MCF 10A (cell line): ENCODE measurements at regions of chr19 and their contacts with region 1.

Region 1: DNA sequence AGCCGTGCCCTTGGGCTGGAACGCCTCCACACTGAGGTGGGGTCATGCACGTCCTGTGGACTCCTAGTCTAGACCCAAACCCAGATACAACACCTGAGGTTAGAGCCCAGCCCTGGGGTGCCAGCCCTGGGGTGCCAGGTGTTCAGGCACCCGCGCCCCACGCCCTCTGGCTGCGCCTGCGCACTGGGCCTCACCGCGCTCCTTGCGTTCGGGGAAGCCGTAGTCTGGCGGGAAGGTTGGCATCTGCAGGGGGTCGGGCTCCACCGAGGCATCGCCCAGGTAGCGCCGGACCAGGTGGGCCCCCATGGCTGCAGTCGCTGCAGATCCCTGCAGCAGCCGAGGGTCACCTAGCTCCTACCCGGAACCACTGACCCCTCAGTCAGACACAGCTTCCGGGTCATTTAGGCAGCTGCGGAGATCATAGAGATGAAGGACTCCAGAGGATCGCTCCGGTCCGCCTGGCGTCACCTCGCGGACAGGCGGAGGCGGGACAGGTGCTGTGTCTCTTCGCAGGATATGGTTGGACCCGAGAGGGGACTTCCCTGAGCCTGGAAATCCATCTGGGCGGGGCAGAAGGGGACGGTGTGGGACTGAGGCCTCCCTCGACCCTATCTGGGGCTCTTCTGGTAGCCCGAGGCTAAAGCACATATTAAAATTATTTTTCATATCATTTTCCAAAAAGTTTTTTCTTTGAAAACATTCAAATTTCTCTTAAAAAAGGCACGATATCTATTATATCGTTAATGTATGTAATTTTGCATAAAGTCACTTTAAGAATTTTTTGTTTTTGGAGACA is at the start of gene NDUFB7:
- DNase-seq: peak; percentile 96
- H3K4me3 Mint-ChIP-seq: peak within 1 kb of the TSS; percentile 94
- H3K27ac Mint-ChIP-seq: peak within 1 kb of the TSS; percentile 78
- H3K4me1 Mint-ChIP-seq: peaks cover 11% of the 10 kb centered on the region
- H3K27me3 Mint-ChIP-seq: no peaks in the 10 kb centered on the region
- CTCF ChIP-seq: peak; percentile 60
- total RNA-seq, gene NDUFB7: 153 and 165 TPM in 2 replicates

Region 2: GRCh38 chr19:14517840-14518505 is 53.9 kb before region 1 on chr19 and contains the start of gene DNAJB1:
- CTCF ChIA-PET with region 1: interaction called, 4 read pairs
- POLR2A ChIA-PET with region 1: interaction called, 15 read pairs
- intact Hi-C with region 1: no loop called
- DNase-seq: peak; percentile 85
- H3K4me3 Mint-ChIP-seq: peak within 1 kb of the TSS; percentile 87
- H3K27ac Mint-ChIP-seq: peak within 1 kb of the TSS; percentile 97
- H3K4me1 Mint-ChIP-seq: peaks cover 23% of the 10 kb centered on the region
- H3K27me3 Mint-ChIP-seq: no peaks in the 10 kb centered on the region
- CTCF ChIP-seq: no peak
- total RNA-seq, gene DNAJB1: 71.6 and 97.4 TPM in 2 replicates

Region 3: DNA sequence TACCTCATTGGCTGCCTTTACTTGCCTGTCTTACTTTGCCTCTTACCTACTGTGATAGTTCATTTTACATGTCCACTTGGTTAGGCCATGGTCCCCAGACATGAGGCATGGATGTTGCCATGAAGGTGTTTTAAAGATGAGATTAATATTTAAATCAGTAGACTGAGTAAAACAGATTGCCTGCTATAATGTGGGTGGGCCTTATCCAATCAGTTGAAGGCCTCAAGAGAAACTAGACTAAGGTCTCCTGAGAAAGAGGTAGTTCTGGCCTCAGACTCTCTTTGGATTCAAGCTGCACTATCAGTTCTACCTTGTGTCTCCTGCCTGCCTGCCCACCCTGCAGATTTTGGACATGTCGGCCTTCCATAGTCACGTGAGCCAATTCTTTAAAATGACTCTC is 76.6 kb after region 1 on chr19:
- CTCF ChIA-PET with region 1: interaction called, 13 read pairs
- POLR2A ChIA-PET with region 1: no interaction called
- intact Hi-C with region 1: no loop called
- DNase-seq: no peak
- H3K4me3 Mint-ChIP-seq: no peak overlapping the region
- H3K27ac Mint-ChIP-seq: no peak overlapping the region
- H3K4me1 Mint-ChIP-seq: no peaks in the 10 kb centered on the region
- H3K27me3 Mint-ChIP-seq: peaks cover 30% of the 10 kb centered on the region
- CTCF ChIP-seq: no peak

Region 4: DNA sequence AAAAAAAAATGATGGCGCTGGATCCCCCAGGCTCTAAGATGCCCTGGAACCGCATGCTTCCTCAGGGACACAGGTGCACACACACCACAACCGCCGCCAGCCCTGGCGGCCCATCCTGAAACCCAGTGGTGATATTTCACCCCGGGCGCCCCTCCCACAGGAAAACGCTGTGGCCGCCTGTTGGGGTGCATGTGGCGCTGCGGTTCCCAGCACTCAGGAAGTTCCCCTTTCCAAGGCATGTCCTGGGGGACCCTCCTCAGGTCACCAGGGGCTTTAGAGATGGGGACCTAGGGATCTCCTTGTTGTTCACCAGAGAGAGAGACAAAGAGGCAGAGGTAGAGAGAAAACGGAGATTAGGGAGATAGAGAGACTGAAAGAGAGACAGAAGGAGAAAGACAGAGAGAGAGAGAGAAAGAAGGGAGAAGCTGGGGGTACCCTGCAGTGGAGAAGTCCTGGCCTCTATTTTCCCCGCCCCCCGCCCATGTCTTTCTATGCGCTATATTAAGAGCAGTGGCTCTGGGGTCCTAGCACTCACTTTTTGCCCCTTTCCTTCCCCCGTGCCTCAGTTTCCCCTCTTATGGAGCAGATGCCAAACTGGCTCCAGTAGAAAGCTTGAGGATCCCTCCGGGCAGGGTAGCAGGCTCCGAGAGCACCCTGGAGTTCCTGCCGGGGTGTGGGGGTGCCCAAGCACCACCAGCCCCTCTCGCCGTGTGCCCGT is 204.1 kb after region 1 on chr19:
- CTCF ChIA-PET with region 1: interaction called, 12 read pairs
- POLR2A ChIA-PET with region 1: interaction called, 3 read pairs
- intact Hi-C with region 1: no loop called
- DNase-seq: peak; percentile 3
- H3K4me3 Mint-ChIP-seq: peak overlapping the region; percentile 74
- H3K27ac Mint-ChIP-seq: peak overlapping the region; percentile 53
- H3K4me1 Mint-ChIP-seq: peaks cover 6% of the 10 kb centered on the region
- H3K27me3 Mint-ChIP-seq: no peaks in the 10 kb centered on the region
- CTCF ChIP-seq: no peak

Region 5: DNA sequence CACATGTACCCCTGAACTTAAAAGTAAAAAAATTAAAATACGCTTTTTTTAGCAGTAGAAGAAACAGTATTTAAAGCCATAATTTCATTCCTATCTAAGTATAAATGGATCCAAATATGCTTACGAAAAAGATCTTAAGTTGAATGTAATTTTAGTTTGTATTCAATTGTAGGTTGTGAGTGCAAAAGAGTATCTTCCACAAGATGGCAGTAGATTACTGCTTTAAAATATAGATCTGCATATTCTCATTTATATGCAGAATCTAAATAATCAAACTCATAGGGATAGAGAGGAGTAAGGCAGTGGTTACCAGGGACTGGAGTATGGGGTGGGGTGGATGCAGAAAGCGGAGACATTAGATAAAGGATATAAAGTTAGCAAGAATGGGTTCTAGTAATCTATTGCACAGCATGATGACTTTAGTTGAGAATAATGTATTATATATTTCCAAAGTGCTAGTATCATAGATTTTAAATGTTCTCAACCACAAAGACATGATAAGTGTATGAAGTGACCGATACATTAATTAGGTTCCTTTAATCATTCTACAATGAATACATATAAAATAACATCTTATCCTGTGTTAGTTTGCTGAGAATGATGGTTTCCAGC is 299.8 kb after region 1 on chr19:
- CTCF ChIA-PET with region 1: no interaction called
- POLR2A ChIA-PET with region 1: no interaction called
- intact Hi-C with region 1: loop called (anchors 5 kb)
- DNase-seq: peak; percentile 20
- H3K4me3 Mint-ChIP-seq: no peak overlapping the region
- H3K27ac Mint-ChIP-seq: no peak overlapping the region
- H3K4me1 Mint-ChIP-seq: no peaks in the 10 kb centered on the region
- H3K27me3 Mint-ChIP-seq: peaks cover 40% of the 10 kb centered on the region
- CTCF ChIP-seq: peak; percentile 49

Region 6: DNA sequence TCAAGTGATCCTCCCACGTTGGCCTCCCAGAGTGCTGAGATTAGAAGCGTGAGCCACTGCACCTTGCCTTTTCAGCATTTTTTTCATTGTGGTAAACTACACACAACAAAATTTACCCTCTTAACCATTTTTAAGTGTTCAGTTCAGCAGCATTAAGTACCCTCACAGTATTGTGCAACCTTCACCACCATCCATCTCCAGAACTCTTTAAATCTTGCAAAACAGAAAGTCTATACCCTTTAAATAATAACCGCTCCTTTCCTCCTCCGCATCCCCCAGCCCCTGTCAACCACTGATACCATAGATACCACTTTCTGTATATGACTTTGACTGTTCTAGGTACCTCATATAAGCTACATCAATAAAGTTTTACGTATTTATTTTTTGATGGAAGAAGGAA is 456.6 kb after region 1 on chr19:
- CTCF ChIA-PET with region 1: interaction called, 6 read pairs
- POLR2A ChIA-PET with region 1: no interaction called
- intact Hi-C with region 1: loop called (anchors 5 kb)
- DNase-seq: no peak
- H3K4me3 Mint-ChIP-seq: no peak overlapping the region
- H3K27ac Mint-ChIP-seq: no peak overlapping the region
- H3K4me1 Mint-ChIP-seq: no peaks in the 10 kb centered on the region
- H3K27me3 Mint-ChIP-seq: no peaks in the 10 kb centered on the region
- CTCF ChIP-seq: no peak